Spleen (tissue), 13 donors: ENCODE measurements at regions of chr15 and their contacts with region 1.

Region 1: DNA sequence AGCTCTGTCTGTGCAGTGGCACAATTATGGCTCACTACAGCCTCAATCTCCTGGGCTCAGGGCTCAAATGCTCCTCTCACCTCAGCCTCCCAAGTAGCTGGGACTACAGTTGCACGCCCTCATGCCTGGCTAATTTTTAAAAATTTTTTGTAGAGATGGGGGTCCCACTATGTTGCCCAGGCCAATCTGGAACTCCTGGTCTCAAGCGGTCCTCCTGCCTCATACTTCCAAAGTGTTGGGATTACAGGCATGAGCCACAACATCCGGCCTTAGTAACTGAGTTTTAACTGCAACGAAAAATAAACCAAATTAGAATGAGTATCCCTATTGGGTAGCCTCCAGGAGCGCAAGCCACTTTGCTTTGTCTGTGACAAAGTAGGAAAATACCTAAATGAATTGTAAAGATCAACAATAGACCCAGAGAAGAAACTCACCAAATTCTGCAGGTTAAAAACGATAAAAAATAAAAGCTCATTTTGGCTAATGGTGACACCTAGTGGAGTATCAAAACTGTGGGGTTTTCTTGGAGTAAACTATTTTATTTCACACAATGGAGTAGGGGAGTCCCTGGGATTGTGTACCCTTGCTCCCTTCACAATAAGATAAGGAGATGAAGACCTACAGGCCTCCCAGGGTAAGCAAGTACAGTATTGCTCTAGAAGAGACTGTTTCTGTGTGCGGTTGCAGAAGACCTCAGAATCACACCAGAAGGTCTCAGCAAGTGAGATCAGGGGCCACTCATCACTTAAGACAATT is 21.0 kb upstream of the CA12 start:
- DNase-seq: no peak
- H3K4me3 ChIP-seq: no peak overlapping the region
- H3K27ac ChIP-seq: peak overlapping the region in 4 of 8 donors; percentile 3 to 82 (median 70)
- H3K4me1 ChIP-seq: peaks cover 0 to 42% (median 8%) of the 10 kb centered on the region in 6 donors
- H3K27me3 ChIP-seq: no peaks in the 10 kb centered on the region
- CTCF ChIP-seq: peak in 10 of 11 experiments; percentile 13 to 66 (median 60)
- POLR2A ChIP-seq: no peak

Region 2: DNA sequence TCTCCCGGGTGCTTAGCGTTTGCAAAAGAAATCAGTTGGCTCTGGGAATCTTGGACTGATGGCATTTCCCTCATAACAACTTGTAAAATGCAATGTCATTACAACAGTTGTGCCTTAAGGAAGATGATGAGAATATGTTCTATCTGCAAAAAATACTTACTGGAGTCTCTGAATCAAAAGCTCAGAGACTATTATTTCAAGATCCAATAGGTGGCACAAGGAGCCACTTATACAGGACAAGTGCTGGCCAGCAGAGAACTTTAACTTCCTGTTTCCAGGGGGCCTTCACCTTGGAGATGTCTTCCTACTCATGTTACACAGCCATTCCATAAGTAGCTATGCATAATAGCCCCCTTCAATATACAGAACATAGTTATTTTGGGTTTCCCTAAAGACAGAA is 236.5 kb before region 1 on chr15:
- intact Hi-C with region 1: loop called (anchors 10 kb)
- DNase-seq: no peak
- H3K4me3 ChIP-seq: no peak overlapping the region
- H3K27ac ChIP-seq: no peak overlapping the region
- H3K4me1 ChIP-seq: peaks cover 0 to 3% (median 0%) of the 10 kb centered on the region in 6 donors
- H3K27me3 ChIP-seq: no peaks in the 10 kb centered on the region
- CTCF ChIP-seq: peak in 3 of 11 experiments; percentile 17 to 20 (median 19)
- POLR2A ChIP-seq: no peak

Region 3: GRCh38 chr15:63288778-63289378 is 113.8 kb before region 1 on chr15:
- intact Hi-C with region 1: loop called (anchors 5 kb)
- DNase-seq: no peak
- H3K4me3 ChIP-seq: no peak overlapping the region
- H3K27ac ChIP-seq: peak overlapping the region in 2 of 8 donors; percentile 10 to 33
- H3K4me1 ChIP-seq: peaks cover 0 to 69% (median 30%) of the 10 kb centered on the region in 6 donors
- H3K27me3 ChIP-seq: no peaks in the 10 kb centered on the region
- CTCF ChIP-seq: peak; percentile 19 to 76 (median 67)
- POLR2A ChIP-seq: no peak